A673 (cell line): ENCODE measurements at regions of chr6 and their contacts with region 1.

Region 1: DNA sequence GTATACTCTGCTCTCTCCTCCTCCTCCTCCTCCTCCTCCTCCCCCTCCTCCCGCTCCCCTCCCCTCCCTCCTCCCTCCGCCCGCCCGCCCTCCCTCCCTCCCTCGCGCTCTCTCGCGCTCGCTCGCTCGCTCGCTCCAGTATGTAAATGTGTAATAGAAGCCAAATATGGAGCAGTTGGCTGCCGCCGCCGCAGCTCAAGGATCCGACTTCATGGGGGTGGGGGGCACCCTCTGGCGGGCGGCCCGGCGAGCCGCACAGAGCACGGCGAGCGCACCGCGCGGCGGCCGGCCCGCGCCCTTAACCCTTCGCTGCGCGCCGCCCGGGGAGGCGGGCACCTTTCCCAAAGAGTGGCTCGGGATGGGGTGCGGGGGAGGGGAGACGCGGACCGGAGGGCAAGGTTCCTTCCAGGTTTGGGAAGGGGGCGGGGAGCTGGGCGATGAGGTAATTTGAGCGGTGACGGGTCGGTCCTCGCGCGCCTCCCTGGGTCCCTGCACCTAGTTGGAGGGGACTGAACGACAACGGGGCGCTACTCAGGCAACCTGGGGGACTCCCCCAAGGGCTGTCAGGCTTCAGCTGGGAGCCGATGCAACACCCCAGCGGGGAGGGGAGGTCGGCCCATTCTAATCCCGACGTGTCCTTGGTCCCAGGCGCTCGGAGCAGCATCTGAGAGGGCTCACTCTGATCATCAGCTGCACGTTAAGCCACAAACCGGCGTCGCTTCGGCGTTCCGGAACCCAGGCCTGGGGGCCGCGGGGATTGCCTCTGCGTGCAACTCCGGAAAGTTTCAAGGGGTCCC is 409 bp upstream of the ATXN1 start:
- DNase-seq: peak; percentile 96
- H3K4me3 ChIP-seq: peak overlapping the region; percentile 88
- H3K27ac ChIP-seq: peak overlapping the region; percentile 63
- H3K4me1 ChIP-seq: peaks cover 42% of the 10 kb centered on the region
- H3K27me3 ChIP-seq: no peaks in the 10 kb centered on the region
- CTCF ChIP-seq: peak; percentile 39; the same call in 1 of the 2 replicates

Region 2: DNA sequence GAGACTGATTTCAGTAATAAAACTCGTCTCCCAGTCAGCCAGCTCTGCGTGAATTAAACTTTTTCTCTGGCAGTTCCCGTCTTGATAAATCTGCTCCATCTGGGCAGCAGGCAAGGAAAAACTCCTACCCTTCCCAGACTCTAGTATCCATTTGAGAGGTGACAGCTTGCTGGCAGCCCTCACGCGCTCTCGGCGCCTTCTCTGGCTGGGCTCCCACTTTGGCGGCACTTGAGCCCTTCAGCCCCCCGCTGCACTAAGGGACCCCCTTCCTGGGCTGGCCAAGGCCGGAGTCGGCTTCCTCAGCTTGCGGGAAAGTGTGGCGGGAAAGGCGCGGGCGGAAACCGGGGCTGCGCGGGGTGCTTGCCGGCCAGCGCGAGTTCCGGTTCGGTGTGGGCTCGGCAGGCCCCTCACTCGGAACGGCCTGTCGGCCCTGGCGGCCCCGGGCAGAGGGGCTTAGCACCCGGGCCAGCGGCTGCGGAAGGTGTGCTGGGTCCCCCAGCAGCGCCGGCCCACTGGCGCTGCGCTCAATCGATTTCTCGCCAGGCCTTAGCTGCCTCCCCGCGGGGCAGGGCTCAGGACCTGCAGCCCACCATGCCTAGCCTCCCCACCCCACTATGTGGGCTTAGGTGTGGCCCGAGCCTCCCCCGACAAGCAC is 545.0 kb before region 1 on chr6:
- CTCF ChIA-PET with region 1: interaction called, 13 read pairs
- POLR2A ChIA-PET with region 1: no interaction called
- intact Hi-C with region 1: no loop called
- DNase-seq: no peak
- H3K4me3 ChIP-seq: no peak overlapping the region
- H3K27ac ChIP-seq: no peak overlapping the region
- H3K4me1 ChIP-seq: no peaks in the 10 kb centered on the region
- H3K27me3 ChIP-seq: no peaks in the 10 kb centered on the region
- CTCF ChIP-seq: no peak

Region 3: GRCh38 chr6:16345437-16346330 is 416.0 kb before region 1 on chr6:
- CTCF ChIA-PET with region 1: no interaction called
- POLR2A ChIA-PET with region 1: interaction called, 14 read pairs
- intact Hi-C with region 1: no loop called
- DNase-seq: peak; percentile 87
- H3K4me3 ChIP-seq: no peak overlapping the region
- H3K27ac ChIP-seq: peak overlapping the region; percentile 66
- H3K4me1 ChIP-seq: peaks cover 25% of the 10 kb centered on the region
- H3K27me3 ChIP-seq: no peaks in the 10 kb centered on the region
- CTCF ChIP-seq: no peak

Region 4: DNA sequence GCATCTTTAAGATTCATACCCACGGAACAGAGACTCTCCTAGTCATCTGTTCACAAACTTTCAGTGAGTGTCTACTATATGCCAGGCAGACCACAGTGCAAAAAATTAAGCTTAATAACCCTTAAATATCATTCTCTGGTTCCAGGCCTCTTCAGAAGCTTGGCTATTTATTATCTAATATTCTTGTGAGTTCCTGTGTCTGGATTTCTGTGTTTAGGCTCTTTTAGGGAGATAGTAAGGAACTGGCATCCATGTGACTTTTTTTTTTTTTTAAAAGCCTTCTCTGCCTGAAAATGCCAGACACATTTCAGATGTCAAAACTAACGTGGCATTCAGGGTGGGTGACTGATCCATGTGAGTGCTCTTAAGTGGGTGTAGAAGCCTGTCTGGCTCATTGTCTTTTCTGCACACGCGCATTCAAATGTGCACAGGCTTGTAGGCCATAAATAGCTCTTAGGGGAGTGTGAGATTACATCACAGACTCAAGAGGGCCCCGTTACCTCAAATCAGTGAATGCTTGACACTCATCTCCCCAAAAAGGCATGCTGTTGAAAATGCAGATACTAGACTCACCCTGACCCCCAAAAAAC is 381.4 kb before region 1 on chr6:
- CTCF ChIA-PET with region 1: no interaction called
- POLR2A ChIA-PET with region 1: no interaction called
- intact Hi-C with region 1: no loop called
- DNase-seq: no peak
- H3K4me3 ChIP-seq: no peak overlapping the region
- H3K27ac ChIP-seq: no peak overlapping the region
- H3K4me1 ChIP-seq: peaks cover 7% of the 10 kb centered on the region
- H3K27me3 ChIP-seq: no peaks in the 10 kb centered on the region
- CTCF ChIP-seq: no peak

Region 5: DNA sequence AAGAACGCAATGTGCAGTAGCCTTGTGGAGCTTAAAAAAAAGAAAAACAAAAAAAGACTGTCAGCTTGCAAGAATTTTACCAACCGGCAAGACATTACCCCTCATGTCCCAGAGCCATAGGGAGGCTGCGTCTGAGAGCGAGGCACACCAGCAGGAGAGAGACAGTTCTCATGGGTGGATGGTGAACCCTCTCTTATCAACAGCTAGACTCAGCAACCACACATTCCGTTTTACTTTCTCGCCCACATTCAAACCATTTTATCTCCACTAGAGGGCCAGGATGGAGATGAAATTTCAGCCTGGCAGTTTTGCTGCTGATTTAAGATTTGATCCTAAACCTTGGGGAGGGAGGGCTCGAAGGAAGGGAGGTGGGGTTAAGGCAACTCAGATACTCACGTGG is 247.4 kb before region 1 on chr6:
- CTCF ChIA-PET with region 1: interaction called, 13 read pairs
- POLR2A ChIA-PET with region 1: no interaction called
- intact Hi-C with region 1: loop called (anchors 5 kb)
- DNase-seq: peak; percentile 81
- H3K4me3 ChIP-seq: no peak overlapping the region
- H3K27ac ChIP-seq: no peak overlapping the region
- H3K4me1 ChIP-seq: no peaks in the 10 kb centered on the region
- H3K27me3 ChIP-seq: no peaks in the 10 kb centered on the region
- CTCF ChIP-seq: peak; percentile 67

Region 6: DNA sequence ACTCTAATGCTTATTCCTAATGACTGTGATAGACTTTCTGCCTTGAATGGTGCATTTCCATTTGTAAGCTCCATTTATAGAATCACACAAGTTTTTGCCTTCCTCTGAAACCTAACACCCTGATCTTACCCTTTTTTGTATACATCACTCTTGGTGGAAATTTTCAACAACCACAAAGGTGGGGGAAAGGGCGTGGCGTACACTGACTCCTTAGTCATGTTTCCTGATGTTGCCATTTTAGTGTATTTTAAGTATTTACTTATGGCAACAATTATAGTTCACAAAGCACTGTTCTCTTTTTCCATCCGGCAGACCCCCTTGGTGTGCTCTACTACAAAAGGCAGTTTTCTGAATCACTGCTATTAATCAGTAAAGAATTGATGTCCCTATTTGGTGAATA is 92.4 kb before region 1 on chr6:
- CTCF ChIA-PET with region 1: no interaction called
- POLR2A ChIA-PET with region 1: no interaction called
- intact Hi-C with region 1: loop called (anchors 10 kb)
- DNase-seq: peak; percentile 88
- H3K4me3 ChIP-seq: no peak overlapping the region
- H3K27ac ChIP-seq: peak overlapping the region; percentile 45
- H3K4me1 ChIP-seq: peaks cover 16% of the 10 kb centered on the region
- H3K27me3 ChIP-seq: no peaks in the 10 kb centered on the region
- CTCF ChIP-seq: no peak

Region 7: DNA sequence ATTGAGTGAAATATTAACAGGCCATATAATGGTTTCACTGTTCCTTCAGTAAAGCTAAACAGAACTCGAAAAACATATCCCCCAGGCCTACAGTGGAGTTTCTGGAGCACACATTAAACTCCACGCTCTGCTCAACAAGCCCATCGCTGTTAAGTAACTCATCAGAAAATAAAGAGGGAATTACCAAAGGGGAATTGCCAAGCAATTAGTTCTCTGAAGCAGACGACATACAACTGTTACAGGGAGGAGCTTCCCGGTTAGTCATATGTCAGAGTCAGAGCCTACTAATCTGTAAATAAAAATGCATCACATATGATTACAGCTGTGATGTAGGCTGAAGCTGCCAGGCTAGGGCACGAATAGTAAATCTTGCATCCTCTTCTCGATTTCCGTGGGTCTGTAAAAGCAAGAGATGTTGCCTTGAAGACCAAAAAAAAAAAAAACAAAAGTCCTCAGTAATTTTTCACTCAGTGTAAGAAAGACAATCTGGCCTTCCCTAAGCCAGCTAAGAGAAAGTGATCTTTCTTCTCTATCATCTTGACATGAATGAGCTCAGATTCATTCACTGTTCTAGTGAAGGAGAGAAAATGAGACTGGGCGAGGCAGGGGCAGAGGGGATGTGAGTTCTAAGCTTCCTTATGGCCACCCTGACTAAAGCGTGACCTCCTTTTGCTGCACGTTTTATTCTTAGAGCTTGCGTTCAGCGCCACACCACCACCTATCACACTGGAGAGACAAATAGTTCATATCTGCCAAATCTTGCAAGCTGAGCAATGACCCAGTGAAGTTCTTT is 14.2 kb before region 1 on chr6:
- CTCF ChIA-PET with region 1: interaction called, 10 read pairs
- POLR2A ChIA-PET with region 1: no interaction called
- intact Hi-C with region 1: no loop called
- DNase-seq: peak; percentile 64
- H3K4me3 ChIP-seq: no peak overlapping the region
- H3K27ac ChIP-seq: peak overlapping the region; percentile 3
- H3K4me1 ChIP-seq: peaks cover 40% of the 10 kb centered on the region
- H3K27me3 ChIP-seq: no peaks in the 10 kb centered on the region
- CTCF ChIP-seq: no peak

Region 8: DNA sequence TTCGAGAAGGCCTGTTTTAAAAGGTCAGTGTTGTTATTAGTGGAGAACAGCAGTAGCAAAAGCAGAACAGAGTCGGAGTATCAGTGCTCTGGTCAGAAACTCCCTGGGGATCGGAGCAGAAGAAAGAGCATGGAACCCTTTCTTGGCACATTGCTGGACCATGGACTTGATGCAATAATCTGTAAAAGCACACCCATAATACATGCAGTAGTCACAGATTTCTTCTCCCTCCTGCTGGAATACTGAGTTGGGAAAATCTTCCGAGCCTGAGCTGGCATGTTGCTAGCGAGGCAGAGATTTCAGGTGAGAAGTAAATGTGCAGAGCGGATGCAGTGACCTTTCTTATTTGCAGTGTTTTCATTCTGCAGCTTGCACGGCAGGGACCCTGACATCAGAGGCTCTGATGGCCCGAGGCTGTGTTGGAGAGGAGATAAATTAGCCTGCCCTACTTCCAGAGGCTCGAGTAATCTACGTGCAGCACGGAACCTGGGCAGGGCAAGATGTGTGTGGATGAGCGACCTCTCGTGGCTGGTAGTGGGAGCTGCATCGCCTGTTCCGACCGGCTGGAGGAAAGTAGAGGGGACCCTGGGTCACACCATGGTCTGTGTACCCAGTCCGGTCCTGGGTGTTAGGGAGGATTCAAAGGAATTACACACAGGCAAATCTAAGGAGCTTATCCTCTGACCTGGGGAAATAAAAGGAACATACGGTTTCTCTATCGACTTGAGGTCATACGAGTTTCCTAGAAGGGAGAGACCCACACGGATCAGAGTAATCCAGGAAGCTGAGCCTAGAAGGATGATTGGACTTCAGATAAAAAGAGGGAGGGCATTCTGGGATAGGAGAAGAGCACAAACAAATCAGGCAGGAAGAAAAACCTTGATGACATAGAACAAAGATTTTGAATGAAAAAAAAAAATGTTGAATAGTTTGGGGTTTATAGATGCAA is 203.2 kb after region 1 on chr6:
- CTCF ChIA-PET with region 1: interaction called, 8 read pairs
- POLR2A ChIA-PET with region 1: no interaction called
- intact Hi-C with region 1: loop called (anchors 1 kb)
- DNase-seq: peak; percentile 91
- H3K4me3 ChIP-seq: no peak overlapping the region
- H3K27ac ChIP-seq: no peak overlapping the region
- H3K4me1 ChIP-seq: peaks cover 35% of the 10 kb centered on the region
- H3K27me3 ChIP-seq: no peaks in the 10 kb centered on the region
- CTCF ChIP-seq: peak; percentile 99

Region 9: DNA sequence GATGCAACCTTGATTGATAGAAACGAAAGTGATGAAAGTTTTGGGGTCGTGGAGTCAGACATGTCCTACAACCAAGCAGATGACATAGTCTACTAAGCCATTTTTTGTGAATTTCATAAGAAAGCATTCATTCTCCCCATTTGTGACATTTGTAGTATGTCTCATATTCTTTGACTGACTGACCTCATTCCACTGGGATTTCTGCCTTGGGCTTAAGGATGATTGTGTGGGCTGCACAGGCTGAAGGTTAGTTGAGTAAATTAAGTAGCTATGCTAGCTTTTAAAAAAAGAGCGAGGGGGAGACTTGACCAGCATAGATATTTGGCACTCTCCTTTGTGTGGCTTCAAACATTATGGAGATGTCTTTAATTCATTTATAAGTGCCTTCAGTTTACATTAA is 369.1 kb after region 1 on chr6:
- CTCF ChIA-PET with region 1: no interaction called
- POLR2A ChIA-PET with region 1: no interaction called
- intact Hi-C with region 1: no loop called
- DNase-seq: no peak
- H3K4me3 ChIP-seq: no peak overlapping the region
- H3K27ac ChIP-seq: no peak overlapping the region
- H3K4me1 ChIP-seq: no peaks in the 10 kb centered on the region
- H3K27me3 ChIP-seq: no peaks in the 10 kb centered on the region
- CTCF ChIP-seq: no peak